ENCODE measurements at regions of chr2 and their contacts with region 1.

Region 1: GRCh38 chr2:5695981-5696745 is 4.0 kb downstream of the SOX11 start:
- DNase-seq: peak; percentile 91
- H3K4me3 ChIP-seq: peak overlapping the region; percentile 74
- H3K27ac ChIP-seq: peak overlapping the region; percentile 94
- H3K4me1 ChIP-seq: peaks cover 39% of the 10 kb centered on the region
- CTCF ChIP-seq: peak; percentile 32; the same call in 1 of the 2 replicates

Region 2: GRCh38 chr2:5710613-5711012 is 14.4 kb after region 1 on chr2:
- CTCF ChIA-PET with region 1: no interaction called
- POLR2A ChIA-PET with region 1: interaction called, 17 read pairs
- intact Hi-C with region 1: no loop called
- DNase-seq: no peak
- H3K4me3 ChIP-seq: no peak overlapping the region
- H3K27ac ChIP-seq: no peak overlapping the region
- H3K4me1 ChIP-seq: no peaks in the 10 kb centered on the region
- CTCF ChIP-seq: no peak

Region 3: DNA sequence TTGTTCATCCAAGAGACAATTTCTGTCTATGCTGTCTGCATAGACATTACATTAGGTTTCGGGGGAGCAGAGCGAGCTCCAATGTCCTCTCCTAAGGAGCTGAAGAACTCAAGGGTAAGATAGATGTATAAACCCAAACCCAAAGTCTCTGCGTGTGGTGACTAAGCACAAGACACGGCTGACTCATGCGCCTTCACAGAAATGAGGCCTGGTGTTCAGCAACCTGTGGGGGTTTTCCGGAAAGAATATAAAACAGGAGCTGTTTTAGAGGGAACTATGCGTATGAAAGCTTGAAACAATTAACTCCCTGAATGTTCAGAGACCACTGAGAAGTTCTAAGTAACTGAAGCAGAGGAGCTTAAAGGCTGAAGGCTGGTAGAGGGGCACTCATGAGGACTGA is 150.7 kb after region 1 on chr2:
- CTCF ChIA-PET with region 1: no interaction called
- POLR2A ChIA-PET with region 1: interaction called, 10 read pairs
- intact Hi-C with region 1: no loop called
- DNase-seq: no peak
- H3K4me3 ChIP-seq: no peak overlapping the region
- H3K27ac ChIP-seq: no peak overlapping the region
- H3K4me1 ChIP-seq: no peaks in the 10 kb centered on the region
- CTCF ChIP-seq: no peak

Region 4: GRCh38 chr2:6310256-6311215 is 614.4 kb after region 1 on chr2:
- CTCF ChIA-PET with region 1: no interaction called
- POLR2A ChIA-PET with region 1: interaction called, 4 read pairs
- intact Hi-C with region 1: loop called (anchors 1 kb)
- DNase-seq: peak; percentile 72
- H3K4me3 ChIP-seq: peak overlapping the region; percentile 59
- H3K27ac ChIP-seq: peak overlapping the region; percentile 99
- H3K4me1 ChIP-seq: peaks cover 75% of the 10 kb centered on the region
- CTCF ChIP-seq: no peak

Region 5: DNA sequence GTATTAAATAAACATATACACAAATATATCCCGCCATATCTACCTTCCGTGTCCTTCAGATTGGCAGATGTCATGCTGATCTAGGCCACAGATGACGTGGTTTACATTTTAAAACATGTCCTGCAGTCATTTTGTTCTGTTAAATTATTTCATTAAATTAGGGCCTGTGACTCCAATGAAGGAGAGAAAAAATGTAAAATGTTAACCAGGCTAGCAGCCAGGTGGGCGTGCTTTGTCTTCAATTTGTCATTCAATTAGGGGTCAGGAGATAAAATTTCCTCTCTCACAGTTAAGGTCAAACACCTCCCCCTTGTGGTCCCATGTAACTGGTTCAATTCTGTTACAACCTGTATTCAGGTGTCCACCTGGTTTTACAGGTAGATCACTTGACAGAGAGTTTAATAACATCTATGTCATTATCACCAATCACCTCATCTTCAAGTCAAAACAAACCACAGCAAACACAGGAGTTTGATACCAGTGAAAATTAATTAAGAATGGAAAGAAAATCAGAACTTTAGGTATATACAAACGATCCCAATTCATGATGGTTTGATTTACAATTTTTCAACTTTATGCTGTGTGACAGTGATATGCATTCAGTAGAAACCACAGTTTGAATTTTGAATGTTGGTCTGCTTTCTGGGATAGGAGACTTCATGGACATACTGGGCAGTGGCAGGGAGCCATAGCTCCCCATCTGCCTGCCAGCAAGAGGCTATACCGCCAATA is 830.1 kb after region 1 on chr2:
- CTCF ChIA-PET with region 1: no interaction called
- POLR2A ChIA-PET with region 1: no interaction called
- intact Hi-C with region 1: loop called (anchors 5 kb)
- DNase-seq: peak; percentile 78
- H3K4me3 ChIP-seq: no peak overlapping the region
- H3K27ac ChIP-seq: no peak overlapping the region
- H3K4me1 ChIP-seq: peaks cover 14% of the 10 kb centered on the region
- CTCF ChIP-seq: peak; percentile 96

Region 6: GRCh38 chr2:6780765-6781274 is 1084.7 kb after region 1 on chr2:
- CTCF ChIA-PET with region 1: no interaction called
- POLR2A ChIA-PET with region 1: no interaction called
- intact Hi-C with region 1: loop called (anchors 2 kb)
- DNase-seq: peak; percentile 89
- H3K4me3 ChIP-seq: peak overlapping the region; percentile 42
- H3K27ac ChIP-seq: peak overlapping the region; percentile 58
- H3K4me1 ChIP-seq: peaks cover 49% of the 10 kb centered on the region
- CTCF ChIP-seq: no peak

Region 7: DNA sequence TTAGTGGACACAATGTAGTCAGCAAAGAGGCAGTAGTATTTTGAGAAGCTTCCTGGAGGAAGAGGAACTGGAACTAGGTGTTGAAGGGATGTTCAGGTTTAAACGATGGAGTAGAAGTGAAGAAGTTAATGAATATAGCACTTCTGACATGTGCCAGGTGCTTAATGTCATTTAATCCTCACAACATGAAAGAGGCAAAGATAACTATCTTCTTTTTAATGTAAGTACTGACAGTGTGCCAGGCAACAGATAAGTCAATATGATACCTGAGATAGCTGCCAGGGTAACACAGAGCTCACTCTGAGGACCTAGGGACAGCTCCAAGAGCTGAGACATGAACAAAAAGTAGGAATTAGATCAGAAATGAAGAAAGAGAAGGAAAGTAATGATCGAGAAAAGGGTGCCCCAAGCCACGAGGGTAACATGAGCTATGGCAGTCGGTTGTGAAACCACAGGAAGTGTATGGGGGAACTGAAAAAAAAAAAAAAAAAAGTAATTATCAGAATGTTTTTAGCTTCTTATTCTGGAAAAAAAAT is 1361.8 kb after region 1 on chr2:
- CTCF ChIA-PET with region 1: no interaction called
- POLR2A ChIA-PET with region 1: no interaction called
- intact Hi-C with region 1: loop called (anchors 5 kb)
- DNase-seq: peak; percentile 74
- H3K4me3 ChIP-seq: peak overlapping the region; percentile 57
- H3K27ac ChIP-seq: peak overlapping the region; percentile 94
- H3K4me1 ChIP-seq: peaks cover 84% of the 10 kb centered on the region
- CTCF ChIP-seq: no peak